CD14-positive monocyte (primary cell): ENCODE measurements at regions of chr3 and their contacts with region 1.

Region 1: DNA sequence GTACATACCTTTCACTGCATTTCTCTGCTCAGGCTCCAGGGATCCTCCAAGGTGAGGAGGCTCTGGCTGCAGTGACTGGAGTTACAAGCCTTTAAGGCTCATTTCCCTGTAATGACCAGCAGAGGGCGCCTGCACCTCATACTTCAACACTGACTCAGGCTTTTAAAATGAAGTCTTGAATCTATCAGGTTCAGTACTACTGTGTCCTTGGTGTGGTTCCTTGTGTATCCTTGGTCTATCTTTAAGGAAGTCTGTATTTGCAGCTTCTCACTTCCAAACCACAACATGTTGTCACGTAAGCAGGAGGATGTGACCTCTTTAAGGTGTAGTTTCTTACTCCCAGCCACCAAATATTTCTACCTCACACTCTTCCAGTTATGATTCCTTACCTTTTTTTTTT is 122.5 kb upstream of the ZBED2 start:
- DNase-seq: peak; percentile 50 to 76 (median 74)
- H3K4me3 ChIP-seq: no peak overlapping the region
- H3K4me3 Mint-ChIP-seq: no peak overlapping the region
- H3K27ac ChIP-seq: no peak overlapping the region
- H3K27ac Mint-ChIP-seq: no peak overlapping the region
- H3K4me1 ChIP-seq: no peaks in the 10 kb centered on the region
- H3K4me1 Mint-ChIP-seq: no peaks in the 10 kb centered on the region
- H3K27me3 ChIP-seq: no peaks in the 10 kb centered on the region
- H3K27me3 Mint-ChIP-seq: peaks cover 0 to 2% (median 1%) of the 10 kb centered on the region in 3 donors
- CTCF ChIP-seq: peak; percentile 93

Region 2: GRCh38 chr3:111769110-111769991 is 51.8 kb after region 1 on chr3:
- intact Hi-C with region 1: no loop called
- DNase-seq: no peak
- H3K4me3 ChIP-seq: no peak overlapping the region
- H3K4me3 Mint-ChIP-seq: no peak overlapping the region
- H3K27ac ChIP-seq: no peak overlapping the region
- H3K27ac Mint-ChIP-seq: no peak overlapping the region
- H3K4me1 ChIP-seq: no peaks in the 10 kb centered on the region
- H3K4me1 Mint-ChIP-seq: peaks cover 2% of the 10 kb centered on the region
- H3K27me3 ChIP-seq: no peaks in the 10 kb centered on the region
- H3K27me3 Mint-ChIP-seq: no peaks in the 10 kb centered on the region
- CTCF ChIP-seq: no peak

Region 3: DNA sequence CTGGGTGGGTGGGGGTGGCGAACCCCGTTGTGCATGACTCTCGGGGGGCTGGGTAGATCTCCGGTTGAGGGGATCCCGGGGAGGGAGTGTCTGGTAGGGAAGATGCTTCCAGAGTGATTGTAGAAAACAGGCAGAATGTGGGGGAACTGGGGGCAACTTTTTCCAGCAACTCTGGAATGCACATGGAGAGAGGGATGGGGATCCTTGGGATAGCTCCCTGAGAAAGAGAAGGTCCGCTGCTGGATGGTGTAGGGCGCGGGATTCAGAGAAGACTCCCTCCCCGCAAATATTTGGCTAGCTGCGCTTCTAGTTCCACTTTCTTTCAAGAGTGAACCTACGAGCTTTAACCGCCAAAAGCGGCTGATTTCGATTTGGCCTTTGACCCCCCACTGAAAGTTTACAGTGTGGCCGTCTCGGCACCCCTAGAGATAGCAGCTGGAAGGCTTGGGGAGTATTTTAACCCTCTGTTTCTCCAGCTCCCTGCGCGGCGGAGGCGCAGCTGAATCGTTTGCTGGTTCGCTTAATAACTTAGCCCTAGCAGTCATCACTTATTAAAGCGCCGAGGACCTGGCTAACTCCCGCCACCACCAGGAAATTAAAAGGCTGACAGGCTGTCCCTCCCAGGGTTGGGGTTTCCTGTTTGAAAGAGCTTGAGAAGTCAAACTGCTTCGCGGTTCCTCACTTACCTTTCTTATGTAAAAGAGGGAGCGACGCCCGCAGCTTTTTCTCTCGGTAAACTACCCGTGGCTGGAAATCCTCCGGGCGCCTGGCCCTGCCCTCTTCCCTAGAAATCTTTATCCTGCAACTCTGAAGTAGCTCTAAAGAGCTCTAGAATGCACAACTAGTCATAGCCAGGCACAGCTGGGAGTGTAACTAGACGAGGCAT is 142.6 kb after region 1 on chr3:
- intact Hi-C with region 1: no loop called
- DNase-seq: peak; percentile 12 to 37 (median 36)
- H3K4me3 ChIP-seq: peak overlapping the region; percentile 43 to 71 (median 47)
- H3K4me3 Mint-ChIP-seq: peak overlapping the region; percentile 77 to 95
- H3K27ac ChIP-seq: no peak overlapping the region
- H3K27ac Mint-ChIP-seq: peak overlapping the region in 4 of 7 donors; percentile 0 to 78 (median 50)
- H3K4me1 ChIP-seq: peaks cover 19 to 21% of the 10 kb centered on the region in 2 donors
- H3K4me1 Mint-ChIP-seq: peaks cover 22% of the 10 kb centered on the region
- H3K27me3 ChIP-seq: peaks cover 23 to 29% of the 10 kb centered on the region in 2 donors
- H3K27me3 Mint-ChIP-seq: peaks cover 43 to 55% (median 44%) of the 10 kb centered on the region in 3 donors
- CTCF ChIP-seq: no peak

Region 4: DNA sequence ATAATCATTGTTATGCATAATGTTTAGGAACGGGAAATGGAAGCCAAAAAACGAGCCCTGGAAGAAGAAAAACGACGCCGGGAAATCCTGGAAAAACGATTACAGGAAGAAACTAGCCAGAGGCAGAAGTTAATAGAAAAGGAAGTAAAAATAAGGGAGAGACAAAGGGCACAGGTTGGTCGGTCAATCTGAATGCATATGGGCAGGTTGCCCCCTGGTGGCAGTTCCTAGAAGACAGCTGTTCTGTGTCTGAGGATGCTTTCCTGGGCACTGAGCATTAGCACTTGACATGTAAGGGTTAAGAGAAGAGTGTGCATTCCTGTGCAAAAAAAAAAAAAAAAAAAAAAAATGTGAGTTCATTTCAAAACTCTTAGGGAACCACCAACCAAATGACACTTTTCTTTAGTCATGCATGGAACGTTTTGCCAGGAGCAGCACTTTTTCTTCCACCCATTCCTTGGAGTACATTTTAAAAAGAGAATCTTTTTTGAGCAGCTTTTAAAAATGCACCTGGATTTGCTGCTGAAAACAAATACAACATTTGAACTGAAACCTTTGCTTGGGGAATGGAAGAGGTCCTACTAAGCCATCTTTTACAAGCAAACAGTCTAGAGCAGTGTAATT is 250.2 kb after region 1 on chr3:
- intact Hi-C with region 1: loop called in 1 of 2 experiments (anchors 2 kb)
- DNase-seq: peak; percentile 63 to 84 (median 80)
- H3K4me3 ChIP-seq: no peak overlapping the region
- H3K4me3 Mint-ChIP-seq: peak overlapping the region in 1 of 2 donors; percentile 52
- H3K27ac ChIP-seq: no peak overlapping the region
- H3K27ac Mint-ChIP-seq: no peak overlapping the region
- H3K4me1 ChIP-seq: peaks cover 3 to 7% of the 10 kb centered on the region in 2 donors
- H3K4me1 Mint-ChIP-seq: peaks cover 8% of the 10 kb centered on the region
- H3K27me3 ChIP-seq: no peaks in the 10 kb centered on the region
- H3K27me3 Mint-ChIP-seq: peaks cover 0 to 2% (median 1%) of the 10 kb centered on the region in 3 donors
- CTCF ChIP-seq: peak; percentile 93

Region 5: GRCh38 chr3:111978493-111979433 is 261.2 kb after region 1 on chr3 and contains the start of gene ABHD10:
- intact Hi-C with region 1: loop called in 1 of 2 experiments (anchors 5 kb)
- DNase-seq: peak; percentile 97 to 99 (median 97)
- H3K4me3 ChIP-seq: peak within 1 kb of the TSS; percentile 84 to 98 (median 86)
- H3K4me3 Mint-ChIP-seq: peak within 1 kb of the TSS; percentile 87 to 92
- H3K27ac ChIP-seq: peak within 1 kb of the TSS; percentile 85 to 94
- H3K27ac Mint-ChIP-seq: peak within 1 kb of the TSS; percentile 82 to 95 (median 93)
- H3K4me1 ChIP-seq: peaks cover 25 to 39% of the 10 kb centered on the region in 2 donors
- H3K4me1 Mint-ChIP-seq: peaks cover 36% of the 10 kb centered on the region
- H3K27me3 ChIP-seq: no peaks in the 10 kb centered on the region
- H3K27me3 Mint-ChIP-seq: peaks cover 0 to 4% (median 1%) of the 10 kb centered on the region in 3 donors
- CTCF ChIP-seq: no peak
- polyA plus RNA-seq, gene ABHD10: 15.2 to 22.3 (median 17.0) TPM